Endothelial cell of umbilical vein (primary cell): ENCODE measurements at regions of chr6 and their contacts with region 1.

Region 1: DNA sequence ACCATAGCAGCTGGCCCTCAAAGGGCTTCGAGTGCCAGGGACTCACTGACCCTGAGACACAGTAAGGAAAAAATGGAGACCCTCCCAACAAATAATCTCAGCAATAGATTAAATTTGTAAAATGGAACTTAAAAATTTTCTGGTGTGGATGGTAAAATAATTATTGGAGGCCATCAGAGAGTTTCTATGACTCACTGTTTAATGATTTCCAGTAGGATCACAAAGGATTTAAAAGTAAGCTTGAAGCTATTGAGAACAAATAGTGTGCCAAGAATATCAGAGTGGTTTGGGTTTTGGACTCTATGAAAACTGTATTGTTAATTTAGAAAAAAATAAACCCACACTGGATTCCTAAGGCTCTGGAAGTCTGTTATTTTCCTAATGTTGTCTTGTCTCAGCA is 115.2 kb upstream of the AKIRIN2 start:
- DNase-seq: no peak
- H3K4me3 ChIP-seq: no peak overlapping the region
- H3K27ac ChIP-seq: no peak overlapping the region
- H3K4me1 ChIP-seq: no peaks in the 10 kb centered on the region
- H3K27me3 ChIP-seq: no peaks in the 10 kb centered on the region
- CTCF ChIP-seq: no peak
- POLR2A ChIP-seq: no peak

Region 2: GRCh38 chr6:87682310-87682709 is 134.9 kb before region 1 on chr6:
- CTCF ChIA-PET with region 1: no interaction called
- POLR2A ChIA-PET with region 1: interaction called, 10 read pairs
- dilution Hi-C with region 1: no loop called
- intact Hi-C with region 1: no loop called
- DNase-seq: no peak
- H3K4me3 ChIP-seq: no peak overlapping the region
- H3K27ac ChIP-seq: no peak overlapping the region
- H3K4me1 ChIP-seq: no peaks in the 10 kb centered on the region
- H3K27me3 ChIP-seq: no peaks in the 10 kb centered on the region
- CTCF ChIP-seq: no peak
- POLR2A ChIP-seq: no peak

Region 3: GRCh38 chr6:88220493-88220892 is 403.3 kb after region 1 on chr6:
- CTCF ChIA-PET with region 1: no interaction called
- POLR2A ChIA-PET with region 1: no interaction called
- dilution Hi-C with region 1: no loop called
- intact Hi-C with region 1: no loop called
- DNase-seq: peak; percentile 7
- H3K4me3 ChIP-seq: no peak overlapping the region
- H3K27ac ChIP-seq: no peak overlapping the region
- H3K4me1 ChIP-seq: no peaks in the 10 kb centered on the region
- H3K27me3 ChIP-seq: no peaks in the 10 kb centered on the region
- CTCF ChIP-seq: no peak
- POLR2A ChIP-seq: no peak